Dorsolateral prefrontal cortex (tissue), 120 donors: ENCODE measurements at regions of chr3 and their contacts with region 1.

Region 1: GRCh38 chr3:75171630-75172230 is 492.4 kb upstream of the FRG2C start:
- DNase-seq: no peak
- H3K4me3 ChIP-seq: no peak overlapping the region
- H3K27ac ChIP-seq: no peak overlapping the region
- H3K27me3 ChIP-seq: peaks cover 0 to 6% (median 0%) of the 10 kb centered on the region in 45 donors
- CTCF ChIP-seq: peak in 54 of 56 donors; percentile 22 to 71 (median 52)

Region 2: DNA sequence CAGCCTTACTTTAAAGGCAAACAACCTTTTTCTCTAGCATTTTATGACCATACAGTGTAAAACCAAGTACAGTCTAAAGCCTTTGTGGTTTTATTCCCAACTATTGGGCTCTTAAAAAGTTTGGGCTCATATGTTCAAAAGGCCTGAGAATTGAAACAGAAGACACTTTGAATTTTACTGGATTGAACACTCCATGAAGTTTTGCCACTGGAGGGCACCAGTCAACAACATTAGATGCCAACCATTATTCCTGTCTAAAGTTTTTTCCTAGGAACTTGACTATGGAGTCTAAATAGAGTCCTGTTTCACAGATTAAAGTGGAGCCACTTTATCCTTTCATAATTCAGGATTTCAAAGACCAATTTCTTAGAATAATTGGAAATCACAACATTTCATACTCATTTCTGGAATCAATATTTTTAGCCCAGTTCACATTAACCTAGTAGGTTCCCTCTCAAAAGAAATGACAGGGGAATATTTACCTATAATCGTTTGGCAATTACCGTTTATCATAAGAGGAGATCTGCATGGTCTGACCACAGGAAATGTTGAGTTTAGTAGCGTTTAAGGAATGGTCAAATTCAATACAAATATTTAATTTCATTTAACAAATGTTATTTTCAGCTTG is 1302.9 kb before region 1 on chr3:
- intact Hi-C with region 1: loop called in 1 of 2 experiments (anchors 10 kb)
- DNase-seq: peak in 3 of 10 donors; percentile 8 to 59 (median 33)
- H3K4me3 ChIP-seq: no peak overlapping the region
- H3K27ac ChIP-seq: no peak overlapping the region
- H3K27me3 ChIP-seq: no peaks in the 10 kb centered on the region
- CTCF ChIP-seq: peak; percentile 49 to 81 (median 66)